ENCODE measurements at regions of chr7 and their contacts with region 1.

Region 1: DNA sequence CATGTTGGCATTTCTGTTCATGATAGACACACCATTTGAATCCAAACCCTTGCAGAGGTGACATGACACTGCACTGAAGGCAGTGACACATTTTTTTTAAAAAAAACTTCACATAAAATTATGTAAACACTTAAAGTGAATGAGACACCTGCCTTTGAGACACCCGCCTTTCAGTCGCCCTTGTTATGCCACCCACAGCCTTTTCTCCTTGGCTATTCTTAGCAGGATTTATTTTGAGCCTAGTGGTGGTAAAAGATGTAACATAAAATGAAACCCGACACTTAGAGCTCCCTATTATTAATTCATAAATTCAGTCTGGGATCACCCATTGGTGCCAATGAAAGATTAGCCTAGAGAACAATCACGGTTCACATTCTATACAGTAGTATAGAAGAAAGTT is 161.3 kb downstream of the DYNC1I1 start:
- DNase-seq: no peak
- ATAC-seq: peak; percentile 50 to 77 (median 74)
- H3K4me3 ChIP-seq: no peak overlapping the region
- H3K27ac ChIP-seq: peak overlapping the region in 1 of 12 donors; percentile 3
- H3K4me1 ChIP-seq: peaks cover 0 to 5% (median 0%) of the 10 kb centered on the region in 12 donors
- H3K27me3 ChIP-seq: no peaks in the 10 kb centered on the region
- CTCF ChIP-seq: no peak
- POLR2A ChIP-seq: no peak

Region 2: GRCh38 chr7:96739609-96740008 is 806.0 kb after region 1 on chr7:
- intact Hi-C with region 1: loop called in 1 of 10 experiments (anchors 10 kb)
- DNase-seq: no peak
- ATAC-seq: no peak
- H3K4me3 ChIP-seq: no peak overlapping the region
- H3K27ac ChIP-seq: no peak overlapping the region
- H3K4me1 ChIP-seq: no peaks in the 10 kb centered on the region
- H3K27me3 ChIP-seq: peaks cover 0 to 26% (median 5%) of the 10 kb centered on the region in 9 donors
- CTCF ChIP-seq: no peak
- POLR2A ChIP-seq: no peak

Measured in heart left ventricle (tissue), 16 donors.